Sigmoid colon (tissue), 7 donors: ENCODE measurements at regions of chr3 and their contacts with region 1.

Region 1: DNA sequence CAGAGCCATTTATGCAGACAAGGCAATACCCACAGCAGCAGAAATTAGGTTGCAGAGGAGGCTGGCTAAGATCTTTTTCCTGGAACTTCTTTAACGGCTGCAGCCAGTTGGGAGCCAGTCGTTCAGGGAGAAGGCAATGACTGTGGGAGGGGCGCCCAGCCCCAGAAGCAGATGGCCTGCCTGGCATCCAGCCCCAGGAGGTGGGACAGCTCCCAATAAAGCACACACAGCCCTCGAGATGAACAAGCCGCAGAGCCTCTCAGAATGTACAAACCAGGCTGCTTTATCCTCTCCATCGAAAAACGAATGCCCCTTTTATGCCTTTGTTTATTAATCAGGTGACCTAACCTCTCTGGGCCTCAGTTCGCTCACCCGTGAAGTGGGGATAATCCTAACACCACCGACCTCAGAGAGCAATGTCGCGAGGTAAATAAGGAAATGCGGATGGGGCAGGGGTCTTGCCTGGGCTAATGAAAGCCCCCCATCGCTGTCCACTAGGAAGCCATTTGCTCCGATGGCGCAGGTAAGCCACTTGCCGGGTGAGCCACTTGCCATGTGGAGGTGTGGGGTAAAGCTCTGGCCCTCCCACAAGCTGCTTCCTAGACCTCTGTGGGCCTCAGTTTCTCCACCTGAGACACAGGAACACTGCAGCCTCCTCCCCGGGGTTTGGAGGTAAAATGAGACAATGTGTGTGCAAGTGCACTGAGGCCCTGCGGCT is 35.8 kb downstream of the MGLL start:
- DNase-seq: peak; percentile 98
- H3K4me3 ChIP-seq: peak overlapping the region in 3 of 4 donors; percentile 13 to 27 (median 20)
- H3K27ac ChIP-seq: peak overlapping the region; percentile 87 to 95 (median 94)
- H3K4me1 ChIP-seq: peaks cover 0 to 92% (median 77%) of the 10 kb centered on the region in 4 donors
- H3K27me3 ChIP-seq: no peaks in the 10 kb centered on the region
- CTCF ChIP-seq: no peak
- EP300 ChIP-seq: peak in 2 of 4 donors; percentile 36 to 59
- POLR2A ChIP-seq: no peak

Region 2: GRCh38 chr3:127440384-127440783 is 346.1 kb before region 1 on chr3:
- intact Hi-C with region 1: no loop called
- DNase-seq: peak; percentile 36
- H3K4me3 ChIP-seq: no peak overlapping the region
- H3K27ac ChIP-seq: no peak overlapping the region
- H3K4me1 ChIP-seq: no peaks in the 10 kb centered on the region
- H3K27me3 ChIP-seq: no peaks in the 10 kb centered on the region
- CTCF ChIP-seq: no peak
- EP300 ChIP-seq: no peak
- POLR2A ChIP-seq: no peak

Region 3: DNA sequence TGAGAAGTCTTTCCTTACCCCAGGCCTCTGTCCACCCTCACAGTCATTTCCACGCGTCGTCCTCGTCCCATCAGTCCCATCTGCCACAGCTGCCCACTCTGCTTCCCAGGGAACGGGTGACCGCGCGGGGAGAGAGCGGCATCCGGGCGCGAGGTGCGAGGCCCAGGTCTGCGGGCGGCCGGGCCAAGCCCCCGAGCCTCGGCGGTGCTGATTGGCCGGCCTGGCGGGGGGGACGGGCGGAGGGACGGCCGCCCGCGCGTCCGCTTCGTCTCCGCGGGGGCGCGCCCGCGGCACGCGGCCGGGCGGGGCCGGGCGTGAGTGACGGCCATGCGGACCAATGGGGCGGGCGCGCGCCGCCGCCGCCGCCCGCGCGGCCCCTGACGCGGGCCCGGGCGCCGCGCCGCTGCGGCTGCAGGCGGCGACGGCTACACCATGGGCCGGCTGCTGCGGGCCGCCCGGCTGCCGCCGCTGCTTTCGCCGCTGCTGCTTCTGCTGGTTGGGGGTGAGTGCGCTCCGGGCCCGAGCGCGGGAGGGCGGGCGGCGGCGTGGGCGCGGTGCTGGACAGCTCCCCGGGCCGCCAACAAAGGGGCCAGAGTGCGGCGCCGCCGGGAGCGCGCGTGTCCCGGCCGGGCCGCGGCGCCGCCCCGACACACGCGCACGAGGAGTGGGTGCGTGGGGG is 157.6 kb before region 1 on chr3 and contains the start of gene PODXL2:
- intact Hi-C with region 1: no loop called
- DNase-seq: no peak
- H3K4me3 ChIP-seq: peak within 1 kb of the TSS; percentile 9 to 58 (median 46)
- H3K27ac ChIP-seq: no peak within 1 kb of the TSS
- H3K4me1 ChIP-seq: peaks cover 0 to 12% (median 11%) of the 10 kb centered on the region in 4 donors
- H3K27me3 ChIP-seq: peaks cover 0 to 4% (median 0%) of the 10 kb centered on the region in 3 donors
- CTCF ChIP-seq: no peak
- EP300 ChIP-seq: no peak
- POLR2A ChIP-seq: no peak
- total RNA-seq, gene PODXL2: 2.0 to 4.3 (median 2.4) TPM

Region 4: DNA sequence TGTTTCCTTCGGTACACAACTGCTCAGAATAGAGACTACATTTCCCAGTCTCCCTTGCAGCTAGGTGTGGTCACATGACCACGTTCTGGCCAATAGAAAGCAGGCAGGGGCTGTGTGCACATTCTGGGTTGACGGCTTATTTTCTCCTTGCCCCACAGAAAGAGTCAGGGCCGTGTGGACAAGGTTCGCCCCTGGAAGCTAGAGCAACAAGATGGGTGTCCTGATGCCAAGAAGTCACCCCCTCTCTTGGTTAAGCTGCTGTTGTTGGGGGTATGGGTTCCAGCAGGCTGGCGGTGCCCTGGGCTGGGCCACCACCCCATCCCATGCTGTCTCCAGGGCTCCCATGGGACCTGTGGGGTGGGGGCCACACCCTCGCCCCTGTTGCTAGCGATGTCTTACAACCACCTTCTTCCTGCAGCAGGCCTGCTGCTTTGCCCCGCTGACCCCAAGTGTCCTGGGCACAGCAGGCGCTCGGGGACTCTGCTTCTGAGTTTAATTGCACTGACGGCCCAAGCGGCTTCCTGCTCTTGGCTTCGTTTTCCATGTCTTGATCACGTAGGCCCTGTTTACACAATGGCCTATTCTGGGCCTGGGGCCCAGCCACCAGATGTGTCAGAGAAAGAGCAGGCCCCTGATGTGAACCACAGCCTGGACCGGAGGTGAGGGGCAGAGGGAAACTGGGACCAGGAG is 88.8 kb before region 1 on chr3:
- intact Hi-C with region 1: loop called (anchors 1 kb)
- DNase-seq: peak; percentile 97
- H3K4me3 ChIP-seq: peak overlapping the region; percentile 14 to 38 (median 20)
- H3K27ac ChIP-seq: peak overlapping the region; percentile 87 to 97 (median 94)
- H3K4me1 ChIP-seq: peaks cover 0 to 62% (median 52%) of the 10 kb centered on the region in 4 donors
- H3K27me3 ChIP-seq: no peaks in the 10 kb centered on the region
- CTCF ChIP-seq: no peak
- EP300 ChIP-seq: peak in 3 of 4 donors; percentile 79 to 92 (median 90)
- POLR2A ChIP-seq: no peak